Gastrocnemius medialis (tissue), 4 donors: ENCODE measurements at regions of chr16 and their contacts with region 1.

Region 1: GRCh38 chr16:72501739-72502593 is 330.0 kb upstream of the PMFBP1 start:
- DNase-seq: peak in 1 of 2 donors; percentile 24
- ATAC-seq: peak; percentile 52 to 55
- H3K4me3 ChIP-seq: no peak overlapping the region
- H3K27ac ChIP-seq: no peak overlapping the region
- H3K4me1 ChIP-seq: no peaks in the 10 kb centered on the region
- H3K27me3 ChIP-seq: no peaks in the 10 kb centered on the region
- CTCF ChIP-seq: peak; percentile 41 to 75 (median 67)
- POLR2A ChIP-seq: no peak

Region 2: GRCh38 chr16:73082608-73083007 is 580.6 kb after region 1 on chr16:
- in situ Hi-C with region 1: loop called in 1 of 4 experiments (anchors 25 kb)
- intact Hi-C with region 1: no loop called
- DNase-seq: no peak
- ATAC-seq: peak; percentile 68 to 76
- H3K4me3 ChIP-seq: no peak overlapping the region
- H3K27ac ChIP-seq: peak overlapping the region in 1 of 4 donors; percentile 28
- H3K4me1 ChIP-seq: no peaks in the 10 kb centered on the region
- H3K27me3 ChIP-seq: no peaks in the 10 kb centered on the region
- CTCF ChIP-seq: no peak
- POLR2A ChIP-seq: no peak

Region 3: GRCh38 chr16:73202161-73202729 is 700.3 kb after region 1 on chr16:
- in situ Hi-C with region 1: loop called (anchors 10 to 25 kb)
- intact Hi-C with region 1: no loop called
- DNase-seq: no peak
- ATAC-seq: no peak
- H3K4me3 ChIP-seq: no peak overlapping the region
- H3K27ac ChIP-seq: no peak overlapping the region
- H3K4me1 ChIP-seq: no peaks in the 10 kb centered on the region
- H3K27me3 ChIP-seq: no peaks in the 10 kb centered on the region
- CTCF ChIP-seq: no peak
- POLR2A ChIP-seq: no peak